ENCODE measurements at regions of chr19 and their contacts with region 1.

Region 1: GRCh38 chr19:53849237-53849676 is 18.4 kb upstream of the MYADM start:
- DNase-seq: no peak
- ATAC-seq: no peak
- H3K4me3 Mint-ChIP-seq: no peak overlapping the region
- H3K27ac Mint-ChIP-seq: no peak overlapping the region
- H3K4me1 Mint-ChIP-seq: peaks cover 25% of the 10 kb centered on the region
- H3K27me3 Mint-ChIP-seq: peaks cover 26% of the 10 kb centered on the region

Region 2: DNA sequence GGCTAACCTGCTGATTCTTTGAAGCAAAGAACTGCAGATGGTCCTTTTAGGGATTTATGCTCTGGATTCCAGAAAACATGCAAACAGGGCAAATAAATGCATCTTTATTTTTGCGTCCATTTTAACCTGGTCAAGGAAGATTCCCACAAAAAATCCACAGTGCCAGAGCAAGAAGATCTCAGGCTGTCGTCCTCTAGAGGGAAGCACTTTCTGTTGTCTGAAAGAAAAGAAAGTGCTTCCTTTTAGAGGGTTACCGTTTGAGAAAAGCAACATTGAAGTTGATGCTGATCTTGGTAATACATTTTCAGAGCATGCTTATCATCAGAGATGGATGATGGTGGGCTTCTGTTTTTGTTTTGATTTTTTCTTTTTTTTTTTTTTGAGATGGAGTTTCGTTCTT is 142.0 kb before region 1 on chr19:
- CTCF ChIA-PET with region 1: no interaction called
- DNase-seq: no peak
- ATAC-seq: no peak
- H3K4me3 Mint-ChIP-seq: no peak overlapping the region
- H3K27ac Mint-ChIP-seq: no peak overlapping the region
- H3K4me1 Mint-ChIP-seq: no peaks in the 10 kb centered on the region
- H3K27me3 Mint-ChIP-seq: no peaks in the 10 kb centered on the region

Region 3: DNA sequence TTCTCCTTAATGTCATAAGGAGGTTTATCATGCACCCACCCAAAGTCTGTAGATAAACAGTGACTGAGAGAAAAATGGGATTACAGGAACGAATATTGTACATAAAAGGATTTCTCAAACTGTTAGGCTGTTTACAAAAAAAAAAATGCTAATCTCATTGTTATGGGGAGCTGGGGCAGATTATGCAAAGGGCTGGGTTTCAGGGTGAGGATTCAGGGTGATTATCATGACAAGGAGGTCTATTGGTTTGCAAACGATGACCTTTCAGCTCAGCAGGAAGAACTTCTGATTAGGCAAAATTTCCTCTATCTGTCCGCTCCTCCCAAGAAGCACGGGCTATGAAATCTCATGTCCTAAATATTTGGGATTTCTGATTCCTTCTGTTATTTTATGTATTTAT is 66.6 kb before region 1 on chr19:
- CTCF ChIA-PET with region 1: no interaction called
- DNase-seq: no peak
- ATAC-seq: no peak
- H3K4me3 Mint-ChIP-seq: no peak overlapping the region
- H3K27ac Mint-ChIP-seq: no peak overlapping the region
- H3K4me1 Mint-ChIP-seq: no peaks in the 10 kb centered on the region
- H3K27me3 Mint-ChIP-seq: peaks cover 8% of the 10 kb centered on the region

Region 4: GRCh38 chr19:53867225-53868090 is 18.2 kb after region 1 on chr19 and contains the start of gene MYADM:
- CTCF ChIA-PET with region 1: interaction called, 46 read pairs
- DNase-seq: peak; percentile 99
- ATAC-seq: peak; percentile 67
- H3K4me3 Mint-ChIP-seq: peak within 1 kb of the TSS; percentile 97
- H3K27ac Mint-ChIP-seq: peak within 1 kb of the TSS; percentile 93
- H3K4me1 Mint-ChIP-seq: peaks cover 37% of the 10 kb centered on the region
- H3K27me3 Mint-ChIP-seq: no peaks in the 10 kb centered on the region
- total RNA-seq, gene MYADM: 52.2 to 69.4 TPM

Region 5: DNA sequence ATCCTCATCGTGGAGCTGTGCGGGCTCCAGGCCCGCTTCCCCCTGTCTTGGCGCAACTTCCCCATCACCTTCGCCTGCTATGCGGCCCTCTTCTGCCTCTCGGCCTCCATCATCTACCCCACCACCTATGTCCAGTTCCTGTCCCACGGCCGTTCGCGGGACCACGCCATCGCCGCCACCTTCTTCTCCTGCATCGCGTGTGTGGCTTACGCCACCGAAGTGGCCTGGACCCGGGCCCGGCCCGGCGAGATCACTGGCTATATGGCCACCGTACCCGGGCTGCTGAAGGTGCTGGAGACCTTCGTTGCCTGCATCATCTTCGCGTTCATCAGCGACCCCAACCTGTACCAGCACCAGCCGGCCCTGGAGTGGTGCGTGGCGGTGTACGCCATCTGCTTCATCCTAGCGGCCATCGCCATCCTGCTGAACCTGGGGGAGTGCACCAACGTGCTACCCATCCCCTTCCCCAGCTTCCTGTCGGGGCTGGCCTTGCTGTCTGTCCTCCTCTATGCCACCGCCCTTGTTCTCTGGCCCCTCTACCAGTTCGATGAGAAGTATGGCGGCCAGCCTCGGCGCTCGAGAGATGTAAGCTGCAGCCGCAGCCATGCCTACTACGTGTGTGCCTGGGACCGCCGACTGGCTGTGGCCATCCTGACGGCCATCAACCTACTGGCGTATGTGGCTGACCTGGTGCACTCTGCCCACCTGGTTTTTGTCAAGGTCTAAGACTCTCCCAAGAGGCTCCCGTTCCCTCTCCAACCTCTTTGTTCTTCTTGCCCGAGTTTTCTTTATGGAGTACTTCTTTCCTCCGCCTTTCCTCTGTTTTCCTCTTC is 24.7 kb after region 1 on chr19:
- CTCF ChIA-PET with region 1: interaction called, 46 read pairs
- DNase-seq: no peak
- ATAC-seq: no peak
- H3K4me3 Mint-ChIP-seq: peak overlapping the region; percentile 10
- H3K27ac Mint-ChIP-seq: peak overlapping the region; percentile 86
- H3K4me1 Mint-ChIP-seq: peaks cover 57% of the 10 kb centered on the region
- H3K27me3 Mint-ChIP-seq: peaks cover 2% of the 10 kb centered on the region

Region 6: GRCh38 chr19:53881482-53882390 is 32.5 kb after region 1 on chr19 and contains the start of gene PRKCG:
- CTCF ChIA-PET with region 1: interaction called, 11 read pairs
- DNase-seq: peak; percentile 67
- ATAC-seq: peak; percentile 46
- H3K4me3 Mint-ChIP-seq: no peak within 1 kb of the TSS
- H3K27ac Mint-ChIP-seq: no peak within 1 kb of the TSS
- H3K4me1 Mint-ChIP-seq: peaks cover 20% of the 10 kb centered on the region
- H3K27me3 Mint-ChIP-seq: peaks cover 34% of the 10 kb centered on the region
- total RNA-seq, gene PRKCG: not detected

Region 7: DNA sequence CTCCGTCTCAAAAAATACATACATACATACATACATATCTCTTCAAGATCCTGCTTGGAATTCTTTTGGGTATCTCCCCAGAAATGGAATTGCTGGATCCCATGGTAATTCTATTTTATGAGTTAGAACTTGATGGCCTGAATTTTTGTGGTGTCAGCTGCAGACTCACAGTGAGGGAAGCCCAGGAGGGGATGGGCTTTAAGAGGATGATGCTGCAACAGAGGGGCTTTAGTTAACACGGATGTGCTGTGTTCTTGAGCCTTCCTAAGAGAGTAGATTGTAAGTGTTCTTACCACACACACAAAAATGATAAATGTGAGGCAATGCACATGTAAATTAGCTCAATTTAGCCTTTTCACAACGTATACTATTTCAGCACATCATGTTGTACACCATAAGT is 173.9 kb after region 1 on chr19:
- CTCF ChIA-PET with region 1: interaction called, 11 read pairs
- DNase-seq: no peak
- ATAC-seq: no peak
- H3K4me3 Mint-ChIP-seq: no peak overlapping the region
- H3K27ac Mint-ChIP-seq: no peak overlapping the region
- H3K4me1 Mint-ChIP-seq: peaks cover 14% of the 10 kb centered on the region
- H3K27me3 Mint-ChIP-seq: peaks cover 18% of the 10 kb centered on the region